ENCODE measurements at regions of chr14 and their contacts with region 1.

Region 1: GRCh38 chr14:52741865-52742264 is 11.9 kb downstream of the STYX start:
- DNase-seq: no peak
- ATAC-seq: no peak
- H3K4me3 ChIP-seq: no peak overlapping the region
- H3K27ac ChIP-seq: peak overlapping the region; percentile 51
- H3K4me1 ChIP-seq: peaks cover 12% of the 10 kb centered on the region
- H3K27me3 ChIP-seq: no peaks in the 10 kb centered on the region
- CTCF ChIP-seq: no peak

Region 2: DNA sequence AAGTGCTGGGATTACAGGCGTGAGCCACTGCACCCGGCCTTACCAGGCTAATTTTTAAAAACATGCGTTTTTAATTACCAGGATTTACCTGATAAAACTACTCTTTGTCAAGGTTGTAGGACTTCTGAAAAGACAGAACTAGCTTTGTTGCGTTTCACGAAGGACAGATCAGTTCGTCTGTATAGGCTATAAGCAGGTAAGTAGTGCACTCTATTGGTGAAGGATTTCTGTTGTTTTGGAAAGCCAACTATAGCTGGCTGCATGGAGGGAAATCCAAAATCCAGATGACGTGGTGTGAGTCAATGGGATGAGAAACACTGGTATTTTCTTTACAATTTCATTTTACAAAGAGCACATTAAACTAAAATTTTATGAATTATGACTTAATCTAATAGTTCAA is 35.0 kb after region 1 on chr14:
- CTCF ChIA-PET with region 1: interaction called, 3 read pairs
- POLR2A ChIA-PET with region 1: interaction called, 11 read pairs
- intact Hi-C with region 1: no loop called
- DNase-seq: no peak
- ATAC-seq: no peak
- H3K4me3 ChIP-seq: no peak overlapping the region
- H3K27ac ChIP-seq: no peak overlapping the region
- H3K4me1 ChIP-seq: peaks cover 12% of the 10 kb centered on the region
- H3K27me3 ChIP-seq: no peaks in the 10 kb centered on the region
- CTCF ChIP-seq: no peak

Measured in PC-3 (cell line).